Esophagus squamous epithelium (tissue), 5 donors: ENCODE measurements at regions of chr15 and their contacts with region 1.

Region 1: GRCh38 chr15:74127260-74127953 is 3.0 kb upstream of the ISLR2 start:
- DNase-seq: no peak
- H3K4me3 ChIP-seq: peak overlapping the region in 3 of 4 donors; percentile 30 to 63 (median 40)
- H3K27ac ChIP-seq: no peak overlapping the region
- H3K4me1 ChIP-seq: peaks cover 18 to 43% (median 31%) of the 10 kb centered on the region in 3 donors
- H3K27me3 ChIP-seq: peaks cover 15 to 98% (median 43%) of the 10 kb centered on the region in 4 donors
- CTCF ChIP-seq: peak; percentile 95 to 99 (median 97)
- POLR2A ChIP-seq: no peak

Region 2: GRCh38 chr15:74302821-74303359 is 175.5 kb after region 1 on chr15:
- intact Hi-C with region 1: loop called (anchors 5 kb)
- DNase-seq: no peak
- H3K4me3 ChIP-seq: no peak overlapping the region
- H3K27ac ChIP-seq: no peak overlapping the region
- H3K4me1 ChIP-seq: no peaks in the 10 kb centered on the region
- H3K27me3 ChIP-seq: peaks cover 0 to 93% (median 0%) of the 10 kb centered on the region in 4 donors
- CTCF ChIP-seq: peak in 5 of 6 experiments; percentile 51 to 70 (median 63)
- POLR2A ChIP-seq: no peak

Region 3: GRCh38 chr15:74322181-74323076 is 195.0 kb after region 1 on chr15:
- intact Hi-C with region 1: loop called (anchors 5 kb)
- DNase-seq: peak; percentile 14
- H3K4me3 ChIP-seq: no peak overlapping the region
- H3K27ac ChIP-seq: no peak overlapping the region
- H3K4me1 ChIP-seq: peaks cover 0 to 30% (median 13%) of the 10 kb centered on the region in 3 donors
- H3K27me3 ChIP-seq: peaks cover 0 to 6% (median 0%) of the 10 kb centered on the region in 4 donors
- CTCF ChIP-seq: peak; percentile 47 to 86 (median 74)
- POLR2A ChIP-seq: no peak